Colonic mucosa (tissue), 4 donors: ENCODE measurements at regions of chr10 and their contacts with region 1.

Region 1: GRCh38 chr10:7410862-7411670 is at the start of gene SFMBT2:
- DNase-seq: peak; percentile 42
- H3K4me3 ChIP-seq: peak within 1 kb of the TSS; percentile 54
- H3K27ac ChIP-seq: peak within 1 kb of the TSS; percentile 16
- H3K4me1 ChIP-seq: no peaks in the 10 kb centered on the region
- H3K27me3 ChIP-seq: peaks cover 50% of the 10 kb centered on the region
- CTCF ChIP-seq: no peak
- total RNA-seq, gene SFMBT2: 2.3 to 3.5 TPM

Region 2: DNA sequence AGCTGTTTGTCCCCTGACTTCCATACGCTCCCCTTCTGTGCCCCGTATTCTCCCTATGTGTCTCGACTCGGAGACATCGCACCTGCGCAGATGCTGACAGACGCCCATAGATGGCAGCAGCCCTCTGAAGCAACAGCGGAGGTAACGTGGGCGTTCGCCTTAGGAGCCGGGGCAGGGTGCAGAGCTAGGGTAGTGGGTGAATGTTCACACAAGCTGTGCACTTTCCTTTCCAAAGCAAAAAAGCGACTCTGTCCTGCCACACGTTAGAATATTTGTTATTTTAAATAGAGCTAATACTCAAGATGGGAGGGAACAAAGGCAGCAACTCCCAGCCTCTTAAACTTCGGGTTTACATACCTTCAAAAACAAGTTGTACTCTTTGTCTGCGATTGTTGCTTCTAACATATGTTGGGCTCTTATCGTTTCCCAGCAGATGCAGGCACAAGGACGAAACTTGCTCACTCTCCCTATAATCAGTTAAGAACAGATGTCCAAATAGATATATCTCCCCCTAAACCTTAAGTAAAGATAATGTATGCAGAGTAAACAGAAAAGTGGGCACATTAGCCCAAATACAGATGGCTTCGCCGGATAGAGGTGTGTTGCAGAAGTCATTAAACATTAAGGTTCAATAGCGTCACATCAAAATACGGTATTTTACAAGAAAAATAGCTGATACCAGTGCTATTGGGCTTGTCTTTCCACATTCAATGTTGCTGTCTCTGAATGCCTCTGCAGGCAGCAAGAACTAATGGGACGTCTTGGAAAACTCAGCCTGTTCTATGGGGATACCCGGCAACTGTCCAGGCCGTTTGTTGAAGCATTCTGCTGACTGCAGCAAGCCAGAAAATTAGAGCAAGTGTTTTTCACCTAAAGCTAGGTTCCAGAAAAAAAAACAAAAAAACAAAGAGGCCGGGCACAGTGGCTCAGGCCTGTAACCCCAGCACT is 490.7 kb before region 1 on chr10:
- intact Hi-C with region 1: loop called (anchors 10 kb)
- DNase-seq: peak; percentile 57
- H3K4me3 ChIP-seq: no peak overlapping the region
- H3K27ac ChIP-seq: no peak overlapping the region
- H3K4me1 ChIP-seq: no peaks in the 10 kb centered on the region
- H3K27me3 ChIP-seq: no peaks in the 10 kb centered on the region
- CTCF ChIP-seq: peak; percentile 37